Gastrocnemius medialis (tissue), 4 donors: ENCODE measurements at regions of chr2 and their contacts with region 1.

Region 1: DNA sequence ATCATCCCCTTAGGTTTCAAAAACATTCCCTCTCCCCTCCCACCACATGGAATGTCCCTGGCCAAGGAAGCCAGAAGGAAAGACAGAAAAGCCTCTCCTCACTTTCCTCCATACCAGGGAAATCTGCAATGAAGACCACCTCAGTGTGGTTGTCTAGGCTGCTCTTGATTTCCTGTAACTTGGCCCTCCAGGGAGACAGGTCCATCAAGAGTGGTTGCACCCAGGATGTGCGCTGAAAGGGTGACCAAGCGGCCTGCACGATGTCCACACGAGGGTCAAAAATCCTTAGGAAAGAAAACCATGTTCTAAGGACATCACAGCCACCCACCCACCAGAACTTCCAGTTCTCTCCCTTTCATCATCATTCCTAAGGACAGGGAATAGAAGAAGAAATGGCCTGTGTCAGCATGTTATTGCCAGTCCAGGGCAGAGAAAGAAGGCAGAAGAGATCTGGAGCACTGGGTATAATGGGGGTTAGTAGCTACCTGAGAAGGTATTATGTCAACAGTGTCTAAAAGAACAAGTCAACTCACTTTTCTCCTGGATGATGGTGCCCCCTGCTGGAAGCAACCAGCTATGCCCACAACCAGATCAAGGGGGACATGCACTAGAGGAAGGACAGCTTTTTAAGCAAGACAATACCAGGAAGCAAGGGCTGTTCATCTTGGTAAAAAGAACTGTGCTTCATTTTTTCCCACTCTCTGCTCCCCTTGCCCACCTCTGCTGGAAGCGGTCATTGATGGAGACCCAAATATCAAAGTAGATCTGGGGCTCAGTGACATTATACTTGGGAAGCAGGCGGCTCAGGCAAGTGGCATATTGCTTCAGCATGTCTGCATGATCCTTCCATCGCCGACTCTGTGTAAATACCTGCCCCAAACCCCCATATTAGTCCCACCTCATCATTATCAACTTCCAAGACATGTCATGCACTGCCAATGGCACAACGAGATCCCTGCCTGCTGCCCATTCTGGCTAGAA is 9.3 kb downstream of the GGCX start:
- DNase-seq: peak; percentile 71 to 85
- ATAC-seq: peak; percentile 67 to 89
- H3K4me3 ChIP-seq: no peak overlapping the region
- H3K27ac ChIP-seq: peak overlapping the region; percentile 53 to 99 (median 64)
- H3K4me1 ChIP-seq: peaks cover 5 to 13% of the 10 kb centered on the region in 2 donors
- H3K27me3 ChIP-seq: no peaks in the 10 kb centered on the region
- CTCF ChIP-seq: peak; percentile 90 to 96 (median 92)
- POLR2A ChIP-seq: peak in 1 of 2 donors; percentile 12

Region 2: GRCh38 chr2:85390941-85391669 is 160.9 kb before region 1 on chr2:
- in situ Hi-C with region 1: no loop called
- intact Hi-C with region 1: loop called (anchors 1 kb)
- DNase-seq: peak in 1 of 2 donors; percentile 50
- ATAC-seq: no peak
- H3K4me3 ChIP-seq: no peak overlapping the region
- H3K27ac ChIP-seq: no peak overlapping the region
- H3K4me1 ChIP-seq: peaks cover 12 to 15% of the 10 kb centered on the region in 2 donors
- H3K27me3 ChIP-seq: no peaks in the 10 kb centered on the region
- CTCF ChIP-seq: peak; percentile 7 to 64 (median 47)
- POLR2A ChIP-seq: no peak

Region 3: DNA sequence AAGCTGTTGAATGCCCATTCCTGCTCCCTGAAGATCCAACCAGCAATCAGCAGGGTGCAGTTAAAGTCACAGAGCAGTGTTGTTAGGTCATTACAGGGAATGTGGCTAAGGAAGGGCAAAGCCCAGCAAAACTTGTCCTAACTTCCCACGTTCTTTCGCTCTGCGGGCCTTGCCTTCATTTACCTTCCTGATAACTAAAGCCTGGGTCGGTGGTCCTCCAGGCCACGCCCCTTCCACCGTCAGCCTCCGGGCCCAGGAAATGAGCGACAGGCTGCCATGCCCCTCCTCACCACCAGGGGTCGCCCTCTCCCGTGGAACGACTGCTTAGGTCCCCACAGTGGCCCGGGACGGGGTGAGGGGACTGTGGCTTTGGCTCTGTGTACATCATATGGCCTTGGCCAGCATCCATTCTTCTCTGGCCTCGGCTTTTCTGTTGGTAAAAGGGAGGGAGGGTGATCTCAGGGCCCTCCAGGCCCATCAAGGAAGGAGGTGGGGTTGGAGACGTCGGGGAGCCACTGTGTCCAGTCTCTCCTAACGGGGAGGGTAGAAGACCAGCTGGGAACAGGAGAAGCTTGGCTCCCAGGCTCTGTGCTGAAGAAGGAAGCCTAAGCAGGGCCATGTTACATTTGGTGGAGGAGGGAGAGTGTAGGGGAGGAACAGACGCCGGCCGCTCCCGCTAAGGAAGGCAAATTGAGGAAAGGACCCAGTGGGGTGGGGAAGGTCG is 131.3 kb before region 1 on chr2:
- in situ Hi-C with region 1: loop called (anchors 5 kb)
- intact Hi-C with region 1: loop called (anchors 1 kb)
- DNase-seq: peak; percentile 63 to 82
- ATAC-seq: peak; percentile 58 to 66
- H3K4me3 ChIP-seq: peak overlapping the region in 3 of 4 donors; percentile 2 to 19 (median 3)
- H3K27ac ChIP-seq: peak overlapping the region; percentile 93 to 98 (median 95)
- H3K4me1 ChIP-seq: peaks cover 12 to 25% of the 10 kb centered on the region in 2 donors
- H3K27me3 ChIP-seq: no peaks in the 10 kb centered on the region
- CTCF ChIP-seq: peak; percentile 100
- POLR2A ChIP-seq: no peak

Region 4: GRCh38 chr2:85602476-85603234 is 50.7 kb after region 1 on chr2 and contains the start of gene TMEM150A:
- in situ Hi-C with region 1: no loop called
- intact Hi-C with region 1: loop called (anchors 2 kb)
- DNase-seq: peak; percentile 92 to 95
- ATAC-seq: peak; percentile 51 to 60
- H3K4me3 ChIP-seq: peak within 1 kb of the TSS; percentile 74 to 84 (median 84)
- H3K27ac ChIP-seq: peak within 1 kb of the TSS; percentile 93 to 99 (median 94)
- H3K4me1 ChIP-seq: peaks cover 58 to 60% of the 10 kb centered on the region in 2 donors
- H3K27me3 ChIP-seq: no peaks in the 10 kb centered on the region
- CTCF ChIP-seq: peak in 4 of 5 experiments; percentile 68 to 75 (median 71)
- POLR2A ChIP-seq: peak; percentile 98 to 99
- total RNA-seq, gene TMEM150A: 44.4 to 102 (median 80.7) TPM